CD4-positive, alpha-beta memory T cell (primary cell): ENCODE measurements at regions of chr6 and their contacts with region 1.

Region 1: GRCh38 chr6:36428911-36429310 is 13.7 kb downstream of the PXT1 start:
- DNase-seq: peak in 1 of 5 donors; percentile 4
- H3K4me3 ChIP-seq: no peak overlapping the region
- H3K4me3 Mint-ChIP-seq: no peak overlapping the region
- H3K27ac ChIP-seq: no peak overlapping the region
- H3K27ac Mint-ChIP-seq: no peak overlapping the region
- H3K4me1 ChIP-seq: peaks cover 3% of the 10 kb centered on the region
- H3K4me1 Mint-ChIP-seq: peaks cover under 1 to 3% (median under 1%) of the 10 kb centered on the region in 4 donors
- H3K27me3 ChIP-seq: no peaks in the 10 kb centered on the region
- H3K27me3 Mint-ChIP-seq: no peaks in the 10 kb centered on the region

Region 2: DNA sequence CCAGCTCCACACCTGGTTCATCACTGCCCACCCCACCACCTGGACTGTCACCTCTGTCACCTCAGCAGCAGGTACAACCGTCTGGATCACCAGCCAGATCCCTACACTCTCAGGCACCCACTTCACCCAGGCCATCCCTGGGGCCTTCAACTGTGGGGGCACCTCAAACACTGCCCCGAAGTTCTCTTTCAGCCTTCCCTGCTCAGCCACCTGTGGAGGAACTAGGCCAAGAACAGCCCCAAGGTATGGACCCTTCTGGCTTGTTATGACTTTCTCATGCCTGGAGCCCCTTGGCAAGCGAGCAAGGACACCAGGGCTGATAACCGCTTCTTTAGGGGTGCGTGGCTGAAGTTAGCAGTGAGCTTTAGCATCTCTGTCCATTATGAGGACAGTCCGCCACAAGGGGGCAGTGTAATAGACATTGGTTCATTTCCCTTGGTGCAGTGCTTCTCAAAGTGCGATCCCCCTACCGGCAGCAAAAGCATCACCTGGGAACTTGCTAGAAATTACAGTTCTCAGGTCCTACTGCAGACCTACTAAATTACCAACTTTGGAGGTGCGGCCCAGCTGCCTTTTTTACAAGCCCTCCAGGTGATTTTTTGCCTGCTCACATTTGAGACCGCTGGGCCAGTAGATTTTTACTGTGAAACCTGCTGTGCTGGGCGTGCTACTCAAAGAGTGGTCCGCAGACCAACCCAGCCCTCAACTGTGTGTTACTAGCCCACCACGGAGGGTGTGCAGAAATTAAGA is 126.5 kb before region 1 on chr6:
- CTCF ChIA-PET with region 1: no interaction called
- POLR2A ChIA-PET with region 1: no interaction called
- intact Hi-C with region 1: no loop called
- DNase-seq: peak; percentile 86 to 91 (median 87)
- H3K4me3 ChIP-seq: no peak overlapping the region
- H3K4me3 Mint-ChIP-seq: no peak overlapping the region
- H3K27ac ChIP-seq: no peak overlapping the region
- H3K27ac Mint-ChIP-seq: peak overlapping the region in 2 of 7 donors; percentile 30 to 32
- H3K4me1 ChIP-seq: no peaks in the 10 kb centered on the region
- H3K4me1 Mint-ChIP-seq: peaks cover 0 to 9% (median 2%) of the 10 kb centered on the region in 4 donors
- H3K27me3 ChIP-seq: no peaks in the 10 kb centered on the region
- H3K27me3 Mint-ChIP-seq: peaks cover 10 to 22% of the 10 kb centered on the region in 2 donors

Region 3: GRCh38 chr6:36463676-36464075 is 34.8 kb after region 1 on chr6:
- CTCF ChIA-PET with region 1: interaction called, 11 read pairs
- POLR2A ChIA-PET with region 1: interaction called, 4 read pairs
- intact Hi-C with region 1: loop called (anchors 5 kb)
- DNase-seq: no peak
- H3K4me3 ChIP-seq: no peak overlapping the region
- H3K4me3 Mint-ChIP-seq: no peak overlapping the region
- H3K27ac ChIP-seq: no peak overlapping the region
- H3K27ac Mint-ChIP-seq: no peak overlapping the region
- H3K4me1 ChIP-seq: peaks cover 25% of the 10 kb centered on the region
- H3K4me1 Mint-ChIP-seq: peaks cover 30 to 54% (median 41%) of the 10 kb centered on the region in 4 donors
- H3K27me3 ChIP-seq: no peaks in the 10 kb centered on the region
- H3K27me3 Mint-ChIP-seq: no peaks in the 10 kb centered on the region

Region 4: GRCh38 chr6:36487698-36488097 is 58.8 kb after region 1 on chr6:
- CTCF ChIA-PET with region 1: interaction called, 11 read pairs
- POLR2A ChIA-PET with region 1: no interaction called
- intact Hi-C with region 1: loop called (anchors 5 kb)
- DNase-seq: no peak
- H3K4me3 ChIP-seq: no peak overlapping the region
- H3K4me3 Mint-ChIP-seq: no peak overlapping the region
- H3K27ac ChIP-seq: no peak overlapping the region
- H3K27ac Mint-ChIP-seq: peak overlapping the region in 3 of 7 donors; percentile 7 to 44 (median 9)
- H3K4me1 ChIP-seq: no peaks in the 10 kb centered on the region
- H3K4me1 Mint-ChIP-seq: peaks cover 6 to 35% (median 9%) of the 10 kb centered on the region in 4 donors
- H3K27me3 ChIP-seq: no peaks in the 10 kb centered on the region
- H3K27me3 Mint-ChIP-seq: no peaks in the 10 kb centered on the region

Region 5: GRCh38 chr6:36576561-36576960 is 147.7 kb after region 1 on chr6:
- CTCF ChIA-PET with region 1: interaction called, 22 read pairs
- POLR2A ChIA-PET with region 1: no interaction called
- intact Hi-C with region 1: no loop called
- DNase-seq: no peak
- H3K4me3 ChIP-seq: no peak overlapping the region
- H3K4me3 Mint-ChIP-seq: no peak overlapping the region
- H3K27ac ChIP-seq: no peak overlapping the region
- H3K27ac Mint-ChIP-seq: no peak overlapping the region
- H3K4me1 ChIP-seq: no peaks in the 10 kb centered on the region
- H3K4me1 Mint-ChIP-seq: peaks cover 4 to 10% (median 7%) of the 10 kb centered on the region in 4 donors
- H3K27me3 ChIP-seq: no peaks in the 10 kb centered on the region
- H3K27me3 Mint-ChIP-seq: no peaks in the 10 kb centered on the region